Activated T-helper 2 cell treated with anti-CD3 and anti-CD28 coated beads, Interferon-gamma antibody, Interleukin-2, Interleukin-4, amounts not matched to agents 10 μg/mL and 5 μg/mL and 100 μg/mL, durations not matched to agents 14 hours and 24 hours and 36 hours (primary cell): ENCODE measurements at regions of chr11 and their contacts with region 1.

Region 1: DNA sequence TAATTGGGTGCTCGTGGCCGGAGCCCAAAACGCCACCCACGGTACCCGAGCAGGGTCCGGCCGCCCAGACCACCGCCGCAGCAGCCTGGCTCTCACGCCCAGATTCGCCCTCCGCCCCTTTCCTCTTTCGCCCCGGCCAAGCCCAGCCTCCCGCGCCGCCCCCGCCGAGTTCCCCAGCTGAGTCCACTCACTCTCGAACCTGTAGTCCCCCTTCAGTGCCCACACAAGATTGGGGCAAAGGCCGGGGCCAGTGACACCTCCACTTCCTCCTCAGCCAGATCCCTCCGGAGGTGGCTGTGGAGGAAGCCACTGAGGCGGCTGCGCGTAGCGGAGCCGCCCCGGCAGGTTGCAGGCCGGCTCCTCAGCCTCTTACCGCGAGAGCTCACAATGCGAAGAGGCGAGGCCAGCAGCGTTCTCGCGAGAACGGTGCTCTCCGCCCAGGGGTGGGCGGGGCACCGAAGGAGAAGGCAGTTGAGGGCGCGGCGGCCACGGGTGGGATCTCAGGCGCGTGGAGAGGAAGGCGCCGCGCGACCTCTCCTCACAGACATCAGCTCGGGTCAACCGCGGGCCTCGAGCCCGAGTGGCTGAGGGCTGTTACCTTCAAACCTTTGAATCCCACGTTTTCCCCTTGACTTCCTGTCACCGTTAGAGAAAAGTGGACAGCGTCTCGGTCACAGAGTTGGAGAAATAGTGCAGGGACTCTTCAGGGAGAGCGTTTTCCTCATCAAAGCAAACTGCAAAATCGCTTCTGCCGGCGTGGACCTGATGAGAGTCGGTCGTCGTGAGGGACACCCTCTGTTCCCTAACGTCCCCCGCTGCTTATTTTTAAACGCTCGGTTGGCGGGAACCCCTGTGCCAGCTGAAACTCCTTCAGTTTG is at the start of gene BTBD10:
- DNase-seq: peak; percentile 91
- H3K4me3 Mint-ChIP-seq: peak within 1 kb of the TSS; percentile 98
- H3K27ac Mint-ChIP-seq: peak within 1 kb of the TSS; percentile 93
- H3K4me1 Mint-ChIP-seq: peaks cover 30% of the 10 kb centered on the region
- H3K27me3 Mint-ChIP-seq: no peaks in the 10 kb centered on the region
- total RNA-seq, gene BTBD10: 22.6 and 24.9 TPM in 2 replicates

Region 2: DNA sequence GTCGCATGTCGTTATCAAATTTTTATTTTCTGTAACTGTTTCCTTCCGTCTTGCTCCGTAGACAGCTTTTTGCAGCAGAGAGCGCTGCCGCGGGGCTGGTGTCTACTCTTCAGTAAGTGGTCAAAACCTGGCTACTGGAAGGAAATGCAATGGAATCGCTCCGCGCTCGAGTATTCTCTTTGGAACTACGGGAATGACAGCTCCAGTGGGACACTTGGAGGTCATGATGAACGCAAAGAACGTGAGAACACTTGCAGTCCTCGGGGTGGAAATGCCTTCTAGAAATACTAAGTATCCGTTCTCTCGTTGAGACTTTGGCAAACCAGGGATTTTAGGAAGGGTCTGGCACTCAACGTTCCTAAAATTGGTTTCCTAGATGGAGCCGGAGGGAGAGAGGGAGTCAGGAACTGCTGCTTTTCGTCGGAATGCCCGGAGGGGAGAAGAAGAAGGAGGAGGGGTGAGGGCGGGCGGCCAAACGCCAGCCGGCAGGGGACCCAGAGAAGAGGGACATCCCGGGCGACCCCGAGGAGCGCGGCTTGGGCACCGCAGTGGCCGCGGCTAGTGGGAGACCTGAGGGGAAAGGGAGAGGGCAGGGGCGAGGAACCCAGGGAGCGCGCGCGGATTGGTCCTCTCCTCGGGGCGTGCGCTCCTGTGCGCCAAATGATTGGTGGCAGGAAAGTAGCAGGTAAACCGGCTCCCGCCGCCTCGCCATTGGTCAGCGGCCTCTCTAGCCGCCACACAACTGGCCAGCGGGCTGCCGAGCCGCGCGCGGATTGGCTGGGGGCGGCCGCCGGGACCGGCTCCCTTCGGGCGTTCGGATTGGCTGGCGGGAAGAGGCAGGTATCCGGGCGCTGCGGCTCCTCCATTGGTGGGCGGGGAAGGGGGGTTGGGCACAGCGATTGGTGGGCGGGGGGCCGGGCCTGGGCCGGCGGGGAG is 186.0 kb before region 1 on chr11:
- intact Hi-C with region 1: loop called (anchors 1 kb)
- DNase-seq: peak; percentile 97
- H3K4me3 Mint-ChIP-seq: peak overlapping the region; percentile 98
- H3K27ac Mint-ChIP-seq: peak overlapping the region; percentile 79
- H3K4me1 Mint-ChIP-seq: peaks cover 45% of the 10 kb centered on the region
- H3K27me3 Mint-ChIP-seq: peaks cover 57% of the 10 kb centered on the region

Region 3: DNA sequence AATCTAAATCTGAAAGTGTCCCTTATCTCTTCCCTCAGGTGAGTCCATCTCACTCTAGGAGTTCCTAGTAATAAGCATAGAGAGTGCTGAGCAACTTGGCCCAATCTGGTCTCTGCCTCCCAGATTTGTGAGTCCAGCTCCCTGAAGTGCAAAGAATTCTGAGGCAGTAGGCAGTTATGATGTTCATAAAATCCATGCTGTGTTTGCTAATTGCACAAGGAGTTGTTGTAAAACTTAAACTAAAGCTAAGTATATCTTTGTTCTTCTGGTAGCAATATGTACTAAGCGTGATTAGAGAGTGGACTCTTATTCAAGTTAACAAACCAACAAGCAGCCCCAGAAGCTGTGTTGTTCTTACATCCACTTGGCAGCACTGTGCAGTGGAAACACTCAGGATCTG is 40.3 kb after region 1 on chr11:
- intact Hi-C with region 1: no loop called
- DNase-seq: no peak
- H3K4me3 Mint-ChIP-seq: no peak overlapping the region
- H3K27ac Mint-ChIP-seq: no peak overlapping the region
- H3K4me1 Mint-ChIP-seq: no peaks in the 10 kb centered on the region
- H3K27me3 Mint-ChIP-seq: no peaks in the 10 kb centered on the region